ENCODE measurements at regions of chr18 and their contacts with region 1.

Region 1: GRCh38 chr18:40739029-40739428 is 1216.0 kb upstream of the PIK3C3 start:
- DNase-seq: no peak
- H3K4me3 ChIP-seq: no peak overlapping the region
- CTCF ChIP-seq: no peak
- POLR2A ChIP-seq: no peak

Region 2: DNA sequence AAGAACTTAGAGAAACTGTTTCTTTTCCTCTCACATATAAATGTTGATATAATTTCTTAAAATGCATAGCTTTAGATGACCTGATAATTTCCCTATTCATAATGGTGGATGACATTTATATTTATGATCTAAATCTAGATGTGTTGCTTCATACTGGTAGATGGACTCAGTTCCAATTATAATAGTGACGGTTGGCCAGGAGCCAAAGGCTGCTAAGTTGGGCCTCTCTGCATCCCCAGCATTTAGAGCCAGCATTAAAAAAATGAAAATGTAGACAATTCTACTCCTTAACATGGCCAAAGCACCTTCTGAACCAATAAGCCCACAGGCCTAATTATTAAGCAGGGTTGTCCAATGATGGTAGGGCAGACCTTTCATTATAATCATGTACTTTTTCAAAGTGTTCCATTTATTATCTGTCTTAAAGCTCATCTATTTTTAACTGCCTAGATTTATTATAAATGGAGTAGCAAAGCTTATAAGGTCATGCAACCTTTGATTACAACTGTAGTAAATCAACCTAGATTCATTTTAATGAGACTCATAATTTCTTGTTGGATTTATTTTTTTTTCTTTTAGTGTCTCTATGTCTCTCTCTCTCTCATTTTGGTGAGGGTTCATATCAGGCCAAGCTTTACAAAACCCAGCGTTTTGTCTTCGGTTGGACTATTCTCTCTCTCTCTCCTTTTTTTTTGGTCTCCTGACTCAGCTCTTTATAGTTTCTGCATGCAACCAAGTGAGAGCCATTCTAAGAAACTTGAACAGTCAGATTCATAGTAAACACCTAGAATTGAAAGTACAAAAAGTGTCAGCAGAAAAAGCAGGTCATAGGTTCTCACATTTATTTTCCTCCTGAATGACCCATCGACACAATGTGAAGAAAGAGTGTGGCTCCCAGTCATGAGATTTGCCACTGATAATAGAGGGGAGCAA is 800.1 kb before region 1 on chr18:
- intact Hi-C with region 1: no loop called
- DNase-seq: no peak
- H3K4me3 ChIP-seq: no peak overlapping the region
- CTCF ChIP-seq: no peak
- POLR2A ChIP-seq: no peak

Region 3: DNA sequence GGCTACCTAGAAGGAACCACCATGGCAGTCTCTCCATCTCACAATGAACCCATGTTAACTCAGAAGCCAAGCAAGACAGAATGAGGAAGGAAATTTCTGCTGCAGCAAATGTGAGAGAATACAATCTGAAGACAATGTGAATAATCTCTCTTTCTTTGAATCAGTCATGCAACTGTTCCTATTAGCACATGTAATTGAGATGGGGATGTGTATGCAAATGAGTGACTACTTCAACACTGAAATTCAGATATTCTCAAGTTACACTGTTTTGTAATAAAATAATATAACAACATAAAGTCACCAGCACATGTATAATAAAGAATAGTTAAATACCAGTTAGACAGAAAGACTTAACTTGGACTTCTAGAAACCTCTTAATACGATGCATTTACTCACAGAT is 15.4 kb after region 1 on chr18:
- intact Hi-C with region 1: loop called (anchors 1 kb)
- DNase-seq: no peak
- H3K4me3 ChIP-seq: no peak overlapping the region
- CTCF ChIP-seq: no peak
- POLR2A ChIP-seq: no peak

Region 4: GRCh38 chr18:40841467-40841866 is 102.4 kb after region 1 on chr18:
- intact Hi-C with region 1: no loop called
- DNase-seq: no peak
- H3K4me3 ChIP-seq: no peak overlapping the region
- CTCF ChIP-seq: no peak
- POLR2A ChIP-seq: no peak

Measured in lower leg skin (tissue), 4 donors.